Breast epithelium (tissue), 4 donors: ENCODE measurements at regions of chr10 and their contacts with region 1.

Region 1: GRCh38 chr10:1643161-1643907 is 94.0 kb downstream of the ADARB2 start:
- DNase-seq: peak in 1 of 2 donors; percentile 28
- H3K4me3 ChIP-seq: no peak overlapping the region
- H3K27ac ChIP-seq: no peak overlapping the region
- H3K4me1 ChIP-seq: no peaks in the 10 kb centered on the region
- H3K27me3 ChIP-seq: peaks cover 0 to 35% of the 10 kb centered on the region in 2 donors
- CTCF ChIP-seq: no peak
- POLR2A ChIP-seq: no peak

Region 2: GRCh38 chr10:1625731-1626130 is 17.6 kb before region 1 on chr10:
- intact Hi-C with region 1: loop called (anchors 1 kb)
- DNase-seq: no peak
- H3K4me3 ChIP-seq: no peak overlapping the region
- H3K27ac ChIP-seq: no peak overlapping the region
- H3K4me1 ChIP-seq: no peaks in the 10 kb centered on the region
- H3K27me3 ChIP-seq: peaks cover 0 to 9% of the 10 kb centered on the region in 2 donors
- CTCF ChIP-seq: no peak
- POLR2A ChIP-seq: no peak